ENCODE measurements at regions of chr12 and their contacts with region 1.

Region 1: DNA sequence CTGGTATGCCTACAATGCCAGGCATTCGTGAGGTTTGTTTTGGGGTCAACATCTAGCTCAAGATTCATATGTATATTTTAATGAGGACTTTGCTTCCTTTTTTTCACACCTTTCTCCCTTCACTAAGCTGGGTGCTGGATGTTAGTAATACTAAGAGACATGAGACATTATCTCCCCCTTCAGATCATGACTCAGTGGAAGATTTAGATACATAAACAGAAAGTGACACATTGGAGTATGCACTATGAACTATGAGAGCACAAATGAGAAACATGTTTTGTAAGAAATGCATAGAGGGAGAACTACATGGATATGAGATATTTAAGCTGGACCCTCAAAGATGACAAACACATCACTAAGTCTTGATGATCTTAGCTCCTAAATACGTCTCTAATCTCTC is 286.3 kb downstream of the RPAP3 start:
- DNase-seq: no peak
- ATAC-seq: no peak
- H3K4me3 ChIP-seq: no peak overlapping the region
- H3K27ac ChIP-seq: no peak overlapping the region
- H3K4me1 ChIP-seq: no peaks in the 10 kb centered on the region
- H3K27me3 ChIP-seq: no peaks in the 10 kb centered on the region
- CTCF ChIP-seq: no peak
- POLR2A ChIP-seq: no peak

Region 2: GRCh38 chr12:46998811-46999368 is 420.6 kb before region 1 on chr12:
- in situ Hi-C with region 1: no loop called
- intact Hi-C with region 1: no loop called
- DNase-seq: no peak
- ATAC-seq: no peak
- H3K4me3 ChIP-seq: no peak overlapping the region
- H3K27ac ChIP-seq: no peak overlapping the region
- H3K4me1 ChIP-seq: no peaks in the 10 kb centered on the region
- H3K27me3 ChIP-seq: no peaks in the 10 kb centered on the region
- CTCF ChIP-seq: no peak
- POLR2A ChIP-seq: no peak

Region 3: DNA sequence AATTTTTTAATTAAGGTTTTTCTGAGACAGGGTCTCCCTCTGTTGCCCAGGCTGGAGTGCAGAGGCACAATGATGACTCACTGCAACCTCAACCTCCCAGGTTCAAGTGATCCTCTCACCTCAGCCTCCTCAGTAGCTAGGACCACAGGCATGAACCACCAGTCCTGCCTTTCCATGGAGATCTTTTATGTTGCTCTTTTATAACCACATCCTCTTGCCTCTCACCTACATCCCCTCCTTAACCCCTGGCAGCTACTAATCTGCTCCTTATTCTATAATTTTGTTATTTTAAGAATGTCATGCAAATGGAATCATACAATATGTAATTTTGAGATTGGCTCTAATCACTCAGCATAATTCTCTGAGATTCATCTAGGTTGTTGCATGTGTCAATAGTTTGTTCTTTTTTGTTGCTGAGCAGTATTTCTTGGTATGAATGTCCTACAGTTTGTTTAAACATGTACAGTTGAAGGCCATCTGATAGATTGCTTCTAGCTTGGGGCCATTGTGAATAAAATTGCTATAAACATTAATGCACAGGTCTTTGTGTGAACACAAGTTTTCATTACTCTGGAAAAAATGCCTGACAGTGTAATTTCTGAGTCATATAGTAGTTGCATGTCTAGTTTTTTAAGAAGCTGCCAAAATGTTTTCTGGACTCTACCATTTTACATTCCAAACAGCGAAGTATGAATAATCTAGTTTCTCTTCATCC is 90.5 kb before region 1 on chr12:
- in situ Hi-C with region 1: loop called in 1 of 4 experiments (anchors 10 kb)
- intact Hi-C with region 1: no loop called
- DNase-seq: no peak
- ATAC-seq: no peak
- H3K4me3 ChIP-seq: no peak overlapping the region
- H3K27ac ChIP-seq: no peak overlapping the region
- H3K4me1 ChIP-seq: no peaks in the 10 kb centered on the region
- H3K27me3 ChIP-seq: no peaks in the 10 kb centered on the region
- CTCF ChIP-seq: no peak
- POLR2A ChIP-seq: no peak

Measured in gastrocnemius medialis (tissue), 4 donors.